ENCODE measurements at regions of chr17 and their contacts with region 1.

Region 1: GRCh38 chr17:40203131-40203530 is 16.0 kb upstream of the WIPF2 start:
- DNase-seq: no peak
- H3K4me3 Mint-ChIP-seq: no peak overlapping the region
- H3K27ac Mint-ChIP-seq: no peak overlapping the region
- H3K4me1 Mint-ChIP-seq: peaks cover 7% of the 10 kb centered on the region
- H3K27me3 Mint-ChIP-seq: no peaks in the 10 kb centered on the region
- CTCF ChIP-seq: no peak

Region 2: DNA sequence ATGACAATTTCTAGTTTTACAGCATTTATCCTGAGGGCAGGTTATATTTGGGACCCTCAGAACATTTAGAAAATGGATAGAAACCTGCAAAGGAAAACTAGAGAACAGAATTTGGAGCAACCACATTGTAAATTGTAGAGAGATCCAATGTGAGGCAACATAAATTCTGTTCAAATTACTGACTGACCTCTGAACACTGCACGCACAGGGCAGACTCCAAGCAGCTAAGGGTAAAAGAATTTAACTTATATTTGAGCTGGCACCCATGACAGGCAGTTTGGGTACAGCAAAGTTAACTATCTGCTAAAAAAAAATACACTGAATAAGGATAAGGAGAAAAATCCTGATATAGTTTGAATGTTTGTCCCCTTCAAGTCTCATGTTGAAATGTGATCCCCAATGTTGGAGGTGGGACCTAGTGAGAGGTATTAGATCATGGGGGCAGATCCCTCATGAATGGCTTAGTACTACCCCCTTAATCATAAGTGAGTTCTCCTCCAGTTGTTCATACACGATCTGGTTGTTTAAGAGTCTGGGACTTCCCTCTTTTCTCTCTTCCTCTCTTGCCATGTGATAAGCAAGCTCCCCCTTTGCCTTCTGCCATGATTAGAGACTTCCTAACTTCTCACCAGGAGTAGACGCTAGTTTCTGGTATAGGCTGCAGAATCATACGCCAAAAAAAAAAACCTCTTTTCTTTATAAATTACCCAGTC is 877.4 kb before region 1 on chr17:
- CTCF ChIA-PET with region 1: no interaction called
- intact Hi-C with region 1: no loop called
- DNase-seq: no peak
- H3K4me3 Mint-ChIP-seq: no peak overlapping the region
- H3K27ac Mint-ChIP-seq: no peak overlapping the region
- H3K4me1 Mint-ChIP-seq: no peaks in the 10 kb centered on the region
- H3K27me3 Mint-ChIP-seq: no peaks in the 10 kb centered on the region
- CTCF ChIP-seq: no peak

Region 3: DNA sequence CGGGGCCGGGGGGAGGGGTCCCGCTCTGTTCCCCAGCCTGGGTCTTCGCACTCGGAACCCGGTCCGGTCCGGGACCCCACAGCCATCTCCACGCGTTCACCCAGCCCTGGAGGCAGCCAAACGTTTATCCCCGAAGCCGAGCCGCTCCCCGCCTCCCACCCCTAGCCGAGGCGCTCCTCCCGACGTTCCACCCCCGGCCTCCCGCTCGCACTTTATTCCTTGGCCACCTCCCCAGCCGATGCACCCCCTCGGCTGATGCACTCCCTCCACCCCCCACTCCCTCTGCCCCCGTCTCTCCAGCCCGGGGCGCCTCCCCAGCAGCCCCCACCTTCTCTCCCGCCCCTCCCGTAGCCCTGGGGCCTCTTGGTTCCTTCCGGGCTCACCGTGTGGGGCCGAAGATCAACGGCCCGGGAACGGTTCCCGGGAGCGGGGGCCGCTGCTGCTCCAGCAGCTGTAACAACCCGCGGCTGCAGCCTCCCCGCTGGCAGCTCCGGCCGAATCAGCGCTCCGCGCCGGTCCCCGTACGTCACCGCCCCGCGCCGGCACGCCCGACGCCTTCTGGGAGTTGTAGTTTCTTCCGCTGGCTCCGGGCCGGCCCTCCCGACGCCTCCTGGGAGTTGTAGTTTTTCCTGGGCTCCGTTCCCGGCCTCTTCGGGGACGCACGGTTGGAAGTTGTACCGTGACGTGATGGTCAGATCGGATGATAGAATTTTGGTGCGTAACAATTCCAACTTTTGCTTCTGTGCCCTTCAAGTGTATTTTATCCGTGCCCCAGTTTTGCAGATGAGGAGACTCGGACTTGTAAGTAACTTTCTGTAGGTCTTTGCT is 275.8 kb before region 1 on chr17 and contains the starts of genes LRRC3C and ORMDL3:
- CTCF ChIA-PET with region 1: no interaction called
- intact Hi-C with region 1: no loop called
- DNase-seq: no peak
- H3K4me3 Mint-ChIP-seq: peak within 1 kb of the TSS; percentile 74
- H3K27ac Mint-ChIP-seq: peak within 1 kb of the TSS; percentile 66
- H3K4me1 Mint-ChIP-seq: peaks cover 60% of the 10 kb centered on the region
- H3K27me3 Mint-ChIP-seq: no peaks in the 10 kb centered on the region
- CTCF ChIP-seq: no peak
- total RNA-seq, gene LRRC3C: not detected in 2 replicates
- total RNA-seq, gene ORMDL3: 1,738 and 1,968 TPM in 2 replicates

Region 4: DNA sequence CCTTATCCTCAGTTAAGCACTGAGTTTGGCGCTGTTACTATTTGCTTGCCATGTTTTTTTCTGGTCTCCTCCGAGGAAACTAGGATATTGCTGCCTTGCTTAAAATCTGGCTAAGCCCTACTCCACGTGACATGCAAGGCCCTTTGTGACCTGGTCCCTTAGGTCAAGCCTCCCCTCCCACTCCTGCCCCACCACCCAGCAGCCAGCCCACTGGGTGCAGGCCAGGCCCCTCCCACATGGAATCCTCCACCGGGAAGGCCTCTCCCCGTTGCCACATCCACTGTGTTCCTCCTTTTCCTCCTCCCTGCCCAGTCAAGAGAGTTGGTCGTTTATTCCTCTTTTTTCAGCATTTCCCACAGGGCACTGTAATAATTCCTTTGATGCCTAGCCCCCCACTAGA is 206.3 kb before region 1 on chr17:
- CTCF ChIA-PET with region 1: no interaction called
- intact Hi-C with region 1: no loop called
- DNase-seq: no peak
- H3K4me3 Mint-ChIP-seq: no peak overlapping the region
- H3K27ac Mint-ChIP-seq: no peak overlapping the region
- H3K4me1 Mint-ChIP-seq: no peaks in the 10 kb centered on the region
- H3K27me3 Mint-ChIP-seq: no peaks in the 10 kb centered on the region
- CTCF ChIP-seq: no peak

Region 5: DNA sequence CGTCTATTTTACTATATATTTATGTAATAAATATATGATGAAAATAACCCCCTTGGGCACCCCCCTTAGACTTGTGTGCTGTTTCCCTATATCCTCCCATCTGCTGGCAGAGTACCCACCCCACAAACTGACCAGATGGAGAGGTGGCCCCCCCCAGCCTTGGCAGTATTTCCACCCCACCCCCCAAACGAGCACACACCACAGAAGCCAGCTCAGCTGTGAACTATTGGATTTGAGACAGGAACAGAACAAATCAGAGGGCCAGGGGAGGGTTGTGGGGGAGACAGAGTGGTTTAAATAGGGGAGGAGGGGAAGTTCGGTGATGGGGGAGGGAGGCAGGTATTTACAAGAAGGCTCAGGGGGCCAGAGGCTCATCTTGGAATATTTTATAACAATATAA is 110.5 kb before region 1 on chr17:
- CTCF ChIA-PET with region 1: no interaction called
- intact Hi-C with region 1: no loop called
- DNase-seq: no peak
- H3K4me3 Mint-ChIP-seq: no peak overlapping the region
- H3K27ac Mint-ChIP-seq: no peak overlapping the region
- H3K4me1 Mint-ChIP-seq: peaks cover 11% of the 10 kb centered on the region
- H3K27me3 Mint-ChIP-seq: no peaks in the 10 kb centered on the region
- CTCF ChIP-seq: no peak

Region 6: DNA sequence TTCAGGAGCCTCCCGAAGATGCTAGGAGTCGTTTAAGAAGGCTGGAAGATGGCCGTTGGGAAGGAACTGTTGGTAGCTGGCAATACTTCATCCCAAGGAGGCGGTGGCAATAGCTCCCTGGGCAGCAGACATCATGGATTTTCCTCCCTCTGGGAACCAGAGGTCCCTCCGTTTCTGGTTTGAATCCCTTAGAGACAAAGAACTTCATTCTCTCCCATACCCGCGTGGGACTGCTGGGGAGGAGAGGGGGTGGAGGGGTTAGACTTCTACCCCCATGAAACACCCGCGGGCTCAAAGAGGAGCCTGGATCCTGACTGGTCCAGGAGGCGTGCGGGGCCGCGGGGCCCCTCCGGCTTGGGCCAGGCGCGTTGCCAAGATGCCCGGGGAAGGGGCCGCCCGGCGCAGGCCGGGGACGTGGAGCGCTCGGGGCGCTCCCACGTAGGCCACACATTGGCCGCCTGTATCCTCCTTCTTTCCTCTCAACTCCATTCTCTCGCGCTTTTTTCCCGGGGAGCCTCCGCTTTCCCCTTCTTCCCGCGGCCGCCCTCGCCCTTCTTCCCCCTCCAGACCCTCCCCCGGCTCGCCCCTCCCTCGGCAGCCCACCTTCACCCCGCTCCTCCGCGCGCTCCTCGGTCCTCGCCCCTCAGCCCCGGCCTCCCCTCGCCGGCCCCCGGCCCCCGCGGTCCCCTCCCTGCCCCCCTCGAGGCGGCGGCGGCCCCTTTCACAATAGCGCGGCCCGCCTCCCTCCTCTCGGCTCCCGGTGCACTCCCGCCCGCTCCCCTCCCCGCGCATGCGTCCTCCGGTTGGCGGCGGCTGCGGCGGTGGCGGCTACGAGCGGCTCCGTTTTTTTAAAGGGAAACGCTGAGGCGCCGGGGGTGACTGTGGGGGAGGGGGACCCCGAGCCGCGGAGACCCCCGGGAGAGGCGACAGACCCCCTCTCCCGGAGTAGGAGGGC is 81.7 kb before region 1 on chr17 and contains the start of gene MSL1:
- CTCF ChIA-PET with region 1: interaction called, 13 read pairs
- intact Hi-C with region 1: no loop called
- DNase-seq: peak; percentile 100
- H3K4me3 Mint-ChIP-seq: peak within 1 kb of the TSS; percentile 86
- H3K27ac Mint-ChIP-seq: peak within 1 kb of the TSS; percentile 53
- H3K4me1 Mint-ChIP-seq: peaks cover 48% of the 10 kb centered on the region
- H3K27me3 Mint-ChIP-seq: no peaks in the 10 kb centered on the region
- CTCF ChIP-seq: no peak
- total RNA-seq, gene MSL1: 505 and 524 TPM in 2 replicates

Region 7: DNA sequence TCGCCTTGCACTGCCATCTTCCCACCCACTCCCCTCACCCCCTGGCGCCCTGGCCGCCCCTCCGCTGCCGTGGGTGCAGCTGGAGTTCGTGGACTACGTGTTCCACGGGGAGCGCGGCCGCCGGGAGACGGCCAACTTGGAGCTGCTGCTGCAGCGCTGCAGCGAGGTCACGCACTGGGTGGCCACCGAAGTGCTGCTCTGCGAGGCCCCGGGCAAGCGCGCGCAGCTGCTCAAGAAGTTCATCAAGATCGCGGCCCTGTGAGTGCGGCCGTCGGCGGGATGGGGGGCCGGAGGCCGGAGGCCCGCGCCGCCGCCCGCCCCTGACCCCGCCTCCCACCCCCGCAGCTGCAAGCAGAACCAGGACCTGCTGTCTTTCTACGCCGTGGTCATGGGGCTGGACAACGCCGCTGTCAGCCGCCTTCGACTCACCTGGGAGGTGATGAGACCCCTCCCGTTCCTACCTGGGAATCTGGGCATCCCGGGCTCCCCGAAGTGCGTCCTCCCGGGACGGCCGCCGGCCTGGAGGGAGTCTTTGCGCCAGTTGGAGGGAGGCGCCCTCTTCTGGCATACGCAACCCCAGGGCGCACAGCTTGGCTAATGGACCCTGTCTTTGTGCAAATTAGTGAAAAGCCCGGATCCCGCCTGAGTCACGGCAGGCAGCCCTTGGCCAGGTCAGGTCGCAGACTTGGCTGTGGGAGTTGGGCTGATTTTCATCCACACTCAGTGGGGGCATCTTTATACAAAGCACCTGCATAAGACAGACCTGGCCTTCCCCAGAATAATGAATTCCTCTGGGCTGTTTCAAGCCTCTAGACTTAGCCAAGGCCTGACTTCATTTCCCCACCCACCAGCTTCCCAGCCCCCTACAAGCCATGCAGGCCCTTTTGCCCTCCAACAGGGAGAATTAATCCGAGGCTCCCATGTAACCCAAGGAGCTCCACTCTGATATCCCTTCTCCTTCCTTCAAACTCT is 11.6 kb before region 1 on chr17:
- CTCF ChIA-PET with region 1: interaction called, 46 read pairs
- intact Hi-C with region 1: no loop called
- DNase-seq: no peak
- H3K4me3 Mint-ChIP-seq: no peak overlapping the region
- H3K27ac Mint-ChIP-seq: no peak overlapping the region
- H3K4me1 Mint-ChIP-seq: no peaks in the 10 kb centered on the region
- H3K27me3 Mint-ChIP-seq: no peaks in the 10 kb centered on the region
- CTCF ChIP-seq: no peak

Region 8: DNA sequence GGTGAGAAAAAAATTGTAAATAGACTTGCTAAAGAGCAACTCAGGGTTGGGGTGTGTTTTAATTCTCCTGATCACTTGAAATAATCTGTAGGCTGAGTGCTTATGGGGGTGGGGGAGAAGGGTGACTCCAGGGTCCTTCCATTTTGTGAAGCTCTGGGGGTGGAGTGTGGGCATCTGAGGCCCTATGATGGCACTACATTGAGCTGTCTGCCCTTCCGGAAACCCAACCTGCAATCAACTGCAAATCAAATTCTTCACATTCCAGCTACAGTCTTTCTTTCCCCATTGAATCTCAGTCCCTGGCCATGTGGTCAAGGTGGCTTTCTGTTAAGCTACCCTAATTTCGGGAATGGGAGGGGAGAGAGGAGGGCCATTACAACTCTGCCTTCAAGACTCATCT is 78.5 kb after region 1 on chr17:
- CTCF ChIA-PET with region 1: interaction called, 181 read pairs
- intact Hi-C with region 1: no loop called
- DNase-seq: peak; percentile 80
- H3K4me3 Mint-ChIP-seq: peak overlapping the region; percentile 22
- H3K27ac Mint-ChIP-seq: peak overlapping the region; percentile 90
- H3K4me1 Mint-ChIP-seq: peaks cover 71% of the 10 kb centered on the region
- H3K27me3 Mint-ChIP-seq: no peaks in the 10 kb centered on the region
- CTCF ChIP-seq: no peak

Region 9: GRCh38 chr17:40371261-40371929 is 168.3 kb after region 1 on chr17:
- CTCF ChIA-PET with region 1: interaction called, 59 read pairs
- intact Hi-C with region 1: loop called (anchors 2 kb)
- DNase-seq: no peak
- H3K4me3 Mint-ChIP-seq: no peak overlapping the region
- H3K27ac Mint-ChIP-seq: no peak overlapping the region
- H3K4me1 Mint-ChIP-seq: peaks cover 25% of the 10 kb centered on the region
- H3K27me3 Mint-ChIP-seq: no peaks in the 10 kb centered on the region
- CTCF ChIP-seq: no peak

Region 10: GRCh38 chr17:40714473-40714872 is 511.3 kb after region 1 on chr17:
- CTCF ChIA-PET with region 1: interaction called, 19 read pairs
- intact Hi-C with region 1: loop called (anchors 1 kb)
- DNase-seq: no peak
- H3K4me3 Mint-ChIP-seq: no peak overlapping the region
- H3K27ac Mint-ChIP-seq: no peak overlapping the region
- H3K4me1 Mint-ChIP-seq: no peaks in the 10 kb centered on the region
- H3K27me3 Mint-ChIP-seq: peaks cover 60% of the 10 kb centered on the region
- CTCF ChIP-seq: peak; percentile 66

Measured in Calu3 (cell line).